ENCODE measurements at regions of chr2 and their contacts with region 1.

Region 1: GRCh38 chr2:202375609-202376408 is at the start of gene BMPR2:
- DNase-seq: peak; percentile 88
- ATAC-seq: peak; percentile 79
- H3K4me3 Mint-ChIP-seq: peak within 1 kb of the TSS; percentile 98
- H3K27ac Mint-ChIP-seq: peak within 1 kb of the TSS; percentile 87
- H3K4me1 Mint-ChIP-seq: peaks cover 24% of the 10 kb centered on the region
- H3K27me3 Mint-ChIP-seq: no peaks in the 10 kb centered on the region
- CTCF ChIP-seq: no peak
- total RNA-seq, gene BMPR2: 16.5 and 16.8 TPM in 2 replicates

Region 2: GRCh38 chr2:200756618-200757321 is 1619.0 kb before region 1 on chr2:
- CTCF ChIA-PET with region 1: no interaction called
- POLR2A ChIA-PET with region 1: no interaction called
- intact Hi-C with region 1: no loop called
- DNase-seq: no peak
- ATAC-seq: no peak
- H3K4me3 Mint-ChIP-seq: no peak overlapping the region
- H3K27ac Mint-ChIP-seq: no peak overlapping the region
- H3K4me1 Mint-ChIP-seq: no peaks in the 10 kb centered on the region
- H3K27me3 Mint-ChIP-seq: peaks cover 7% of the 10 kb centered on the region
- CTCF ChIP-seq: no peak

Region 3: GRCh38 chr2:202033321-202034248 is 342.2 kb before region 1 on chr2 and contains the start of gene FZD7:
- CTCF ChIA-PET with region 1: no interaction called
- POLR2A ChIA-PET with region 1: no interaction called
- intact Hi-C with region 1: loop called (anchors 5 kb)
- DNase-seq: peak; percentile 79
- ATAC-seq: peak; percentile 87
- H3K4me3 Mint-ChIP-seq: peak within 1 kb of the TSS; percentile 86
- H3K27ac Mint-ChIP-seq: peak within 1 kb of the TSS; percentile 14
- H3K4me1 Mint-ChIP-seq: peaks cover 12% of the 10 kb centered on the region
- H3K27me3 Mint-ChIP-seq: peaks cover 17% of the 10 kb centered on the region
- CTCF ChIP-seq: no peak
- total RNA-seq, gene FZD7: 0.33 and 0.37 TPM in 2 replicates

Region 4: GRCh38 chr2:202290970-202291369 is 84.8 kb before region 1 on chr2:
- CTCF ChIA-PET with region 1: no interaction called
- POLR2A ChIA-PET with region 1: no interaction called
- intact Hi-C with region 1: no loop called
- DNase-seq: no peak
- ATAC-seq: no peak
- H3K4me3 Mint-ChIP-seq: no peak overlapping the region
- H3K27ac Mint-ChIP-seq: no peak overlapping the region
- H3K4me1 Mint-ChIP-seq: no peaks in the 10 kb centered on the region
- H3K27me3 Mint-ChIP-seq: no peaks in the 10 kb centered on the region
- CTCF ChIP-seq: no peak

Region 5: GRCh38 chr2:202387608-202388342 is 12.0 kb after region 1 on chr2:
- CTCF ChIA-PET with region 1: no interaction called
- POLR2A ChIA-PET with region 1: interaction called, 5 read pairs
- intact Hi-C with region 1: loop called (anchors 1 kb)
- DNase-seq: no peak
- ATAC-seq: no peak
- H3K4me3 Mint-ChIP-seq: no peak overlapping the region
- H3K27ac Mint-ChIP-seq: no peak overlapping the region
- H3K4me1 Mint-ChIP-seq: peaks cover 15% of the 10 kb centered on the region
- H3K27me3 Mint-ChIP-seq: no peaks in the 10 kb centered on the region
- CTCF ChIP-seq: no peak

Region 6: GRCh38 chr2:202750763-202751427 is 375.1 kb after region 1 on chr2:
- CTCF ChIA-PET with region 1: no interaction called
- POLR2A ChIA-PET with region 1: no interaction called
- intact Hi-C with region 1: loop called (anchors 10 kb)
- DNase-seq: no peak
- ATAC-seq: peak; percentile 85
- H3K4me3 Mint-ChIP-seq: peak overlapping the region; percentile 54
- H3K27ac Mint-ChIP-seq: peak overlapping the region; percentile 92
- H3K4me1 Mint-ChIP-seq: peaks cover 51% of the 10 kb centered on the region
- H3K27me3 Mint-ChIP-seq: no peaks in the 10 kb centered on the region
- CTCF ChIP-seq: no peak

Region 7: GRCh38 chr2:203014456-203015199 is 638.8 kb after region 1 on chr2 and contains the start of gene NBEAL1:
- CTCF ChIA-PET with region 1: no interaction called
- POLR2A ChIA-PET with region 1: no interaction called
- intact Hi-C with region 1: loop called (anchors 2 kb)
- DNase-seq: peak; percentile 100
- ATAC-seq: peak; percentile 93
- H3K4me3 Mint-ChIP-seq: peak within 1 kb of the TSS; percentile 87
- H3K27ac Mint-ChIP-seq: peak within 1 kb of the TSS; percentile 84
- H3K4me1 Mint-ChIP-seq: peaks cover 26% of the 10 kb centered on the region
- H3K27me3 Mint-ChIP-seq: no peaks in the 10 kb centered on the region
- CTCF ChIP-seq: no peak
- total RNA-seq, gene NBEAL1: 8.9 and 9.3 TPM in 2 replicates